PC-3 (cell line): ENCODE measurements at regions of chr17 and their contacts with region 1.

Region 1: GRCh38 chr17:69473841-69474831 is 59.6 kb downstream of the MAP2K6 start:
- DNase-seq: peak; percentile 18
- ATAC-seq: peak; percentile 84
- H3K4me3 ChIP-seq: no peak overlapping the region
- H3K27ac ChIP-seq: 0 out of 2 replicates have a peak overlapping the region, but pooled peaks have one; percentile 5
- H3K4me1 ChIP-seq: peaks cover 15% of the 10 kb centered on the region
- H3K27me3 ChIP-seq: no peaks in the 10 kb centered on the region
- CTCF ChIP-seq: no peak

Region 2: DNA sequence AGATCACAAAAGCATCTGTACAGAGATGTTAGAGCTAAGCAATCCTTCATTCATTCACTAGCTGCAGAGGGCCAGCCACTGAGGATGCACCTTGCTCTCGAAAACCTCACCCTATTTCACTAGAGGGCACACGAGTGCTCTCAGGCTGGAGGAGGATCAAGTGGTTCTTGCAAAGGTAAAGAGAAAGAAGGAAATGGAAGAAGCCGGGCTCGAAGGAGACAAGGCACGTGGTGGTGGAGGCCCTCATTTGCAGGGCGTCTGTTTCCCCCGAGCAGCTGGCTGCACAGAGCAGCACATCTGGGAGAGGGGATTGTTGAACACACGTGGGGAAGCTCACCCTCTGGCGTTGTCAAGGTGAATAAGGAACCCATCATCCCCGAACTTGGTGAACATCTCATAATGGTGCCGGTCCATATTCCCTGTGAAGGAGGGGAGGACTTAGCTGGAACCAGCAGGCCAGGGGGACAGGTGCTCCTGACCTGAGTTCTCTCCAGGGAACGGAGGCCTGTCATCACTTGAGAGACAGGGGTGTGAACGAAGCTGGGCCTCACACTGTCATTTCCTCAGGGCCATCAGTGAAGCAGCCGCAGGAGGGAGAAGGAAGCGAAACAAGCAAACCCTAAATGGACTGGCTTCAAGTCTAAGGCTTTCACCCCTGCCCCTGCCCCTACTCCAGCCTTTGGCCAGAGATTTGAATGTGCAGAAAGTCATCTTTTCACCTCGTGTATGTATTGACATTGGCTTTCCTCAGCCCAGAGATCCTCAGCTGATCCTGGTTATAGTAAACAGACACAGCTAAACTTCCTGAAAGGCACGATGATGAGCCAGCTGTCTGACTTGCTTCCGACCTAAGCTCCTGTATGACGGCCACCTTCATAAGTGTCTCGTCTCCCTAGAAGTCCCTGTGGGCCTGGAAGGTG is 934.3 kb before region 1 on chr17:
- CTCF ChIA-PET with region 1: no interaction called
- POLR2A ChIA-PET with region 1: no interaction called
- intact Hi-C with region 1: no loop called
- DNase-seq: peak; percentile 19
- ATAC-seq: no peak
- H3K4me3 ChIP-seq: no peak overlapping the region
- H3K27ac ChIP-seq: no peak overlapping the region
- H3K4me1 ChIP-seq: peaks cover 38% of the 10 kb centered on the region
- H3K27me3 ChIP-seq: no peaks in the 10 kb centered on the region
- CTCF ChIP-seq: peak; percentile 52

Region 3: GRCh38 chr17:68993112-68993511 is 481.0 kb before region 1 on chr17:
- CTCF ChIA-PET with region 1: no interaction called
- POLR2A ChIA-PET with region 1: interaction called, 16 read pairs
- intact Hi-C with region 1: no loop called
- DNase-seq: peak; percentile 35
- ATAC-seq: 0 out of 2 replicates have a peak, but pooled peaks have one; percentile 43
- H3K4me3 ChIP-seq: no peak overlapping the region
- H3K27ac ChIP-seq: no peak overlapping the region
- H3K4me1 ChIP-seq: no peaks in the 10 kb centered on the region
- H3K27me3 ChIP-seq: peaks cover 48% of the 10 kb centered on the region
- CTCF ChIP-seq: no peak

Region 4: GRCh38 chr17:69437475-69437874 is 36.7 kb before region 1 on chr17:
- CTCF ChIA-PET with region 1: no interaction called
- POLR2A ChIA-PET with region 1: interaction called, 3 read pairs
- intact Hi-C with region 1: loop called (anchors 5 kb)
- DNase-seq: no peak
- ATAC-seq: no peak
- H3K4me3 ChIP-seq: no peak overlapping the region
- H3K27ac ChIP-seq: no peak overlapping the region
- H3K4me1 ChIP-seq: no peaks in the 10 kb centered on the region
- H3K27me3 ChIP-seq: no peaks in the 10 kb centered on the region
- CTCF ChIP-seq: no peak

Region 5: DNA sequence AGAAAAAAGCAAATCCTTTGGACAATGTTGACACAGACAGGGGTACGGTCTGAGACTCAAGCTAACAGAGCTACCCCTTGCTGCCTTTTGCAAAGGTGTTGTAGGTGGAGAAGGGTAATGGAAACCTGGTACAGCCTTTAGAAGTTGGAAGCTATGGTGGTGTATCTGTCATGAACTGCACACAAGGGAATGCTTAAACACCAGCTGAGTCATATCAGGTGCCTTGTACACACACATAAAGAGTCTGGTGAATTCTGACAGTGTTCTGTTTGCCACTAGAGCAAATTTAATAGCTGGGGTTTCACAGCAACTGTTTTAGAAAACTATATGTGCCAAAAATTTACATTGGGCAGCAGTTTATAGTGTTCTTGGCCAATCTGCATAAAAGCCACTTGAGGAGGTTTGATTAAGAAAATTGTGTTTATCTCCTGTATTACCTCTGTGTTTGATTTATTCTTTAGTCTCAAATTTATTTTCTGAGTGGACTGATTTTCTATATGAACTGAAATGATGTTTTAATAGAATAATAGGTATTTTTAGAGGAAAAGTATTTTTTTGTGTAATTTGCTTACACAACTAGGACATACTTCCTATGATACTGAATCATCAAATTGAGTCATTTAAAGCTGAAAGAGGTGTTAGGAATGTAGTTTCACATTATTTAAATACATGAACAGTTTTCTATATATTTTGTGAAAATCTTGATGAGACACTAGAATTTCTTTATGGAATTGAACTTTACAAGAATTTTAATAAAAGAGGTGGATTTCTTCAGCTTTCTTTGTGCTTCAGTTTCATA is 77.3 kb after region 1 on chr17:
- CTCF ChIA-PET with region 1: no interaction called
- POLR2A ChIA-PET with region 1: no interaction called
- intact Hi-C with region 1: no loop called
- DNase-seq: peak; percentile 68
- ATAC-seq: peak; percentile 100
- H3K4me3 ChIP-seq: no peak overlapping the region
- H3K27ac ChIP-seq: peak overlapping the region; percentile 15; the same call in 1 of the 2 replicates
- H3K4me1 ChIP-seq: peaks cover 13% of the 10 kb centered on the region
- H3K27me3 ChIP-seq: no peaks in the 10 kb centered on the region
- CTCF ChIP-seq: no peak